ENCODE measurements at regions of chr17 and their contacts with region 1.

Region 1: DNA sequence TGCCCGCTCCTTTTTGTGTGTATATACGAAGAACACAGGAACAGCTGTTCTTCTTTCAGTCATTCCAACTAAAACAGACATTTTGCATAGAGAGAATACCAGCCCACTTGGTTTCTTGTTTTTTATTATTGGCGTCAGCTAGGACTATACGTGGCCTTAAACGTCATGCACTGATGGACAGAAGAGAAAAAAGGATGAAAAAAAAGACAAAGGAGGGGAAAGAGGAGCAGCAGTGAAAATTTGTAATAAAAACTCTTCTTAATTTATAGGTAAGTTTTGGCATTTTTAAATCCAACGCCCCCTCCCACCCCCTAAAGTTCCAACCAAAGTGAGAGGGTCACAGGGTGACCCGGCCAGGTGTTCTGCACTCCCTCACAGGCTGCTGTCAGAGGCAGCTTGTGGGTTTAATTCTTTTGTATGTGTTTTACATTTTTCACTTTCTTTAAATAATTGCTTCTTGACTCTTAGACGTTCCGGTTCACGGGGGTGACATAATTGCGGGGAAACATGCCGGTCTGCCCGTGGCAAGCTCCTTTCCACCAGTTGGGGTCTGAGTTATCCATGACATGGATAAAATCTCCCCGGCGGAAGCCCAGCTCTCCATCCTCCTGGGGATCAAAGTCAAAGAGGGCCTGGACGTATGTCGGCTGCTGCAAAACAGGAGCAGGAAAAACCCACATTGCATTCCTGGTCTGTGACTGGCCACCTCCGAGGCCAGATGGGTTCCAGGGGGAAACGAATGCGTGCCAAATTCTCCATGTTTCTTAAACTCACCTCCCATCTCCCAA is 30.9 kb upstream of the SLC25A19 start:
- DNase-seq: no peak
- H3K4me3 ChIP-seq: no peak overlapping the region
- H3K27ac ChIP-seq: peak overlapping the region; percentile 44 to 59
- H3K4me1 ChIP-seq: no peaks in the 10 kb centered on the region
- H3K27me3 ChIP-seq: no peaks in the 10 kb centered on the region
- CTCF ChIP-seq: no peak
- POLR2A ChIP-seq: no peak

Region 2: DNA sequence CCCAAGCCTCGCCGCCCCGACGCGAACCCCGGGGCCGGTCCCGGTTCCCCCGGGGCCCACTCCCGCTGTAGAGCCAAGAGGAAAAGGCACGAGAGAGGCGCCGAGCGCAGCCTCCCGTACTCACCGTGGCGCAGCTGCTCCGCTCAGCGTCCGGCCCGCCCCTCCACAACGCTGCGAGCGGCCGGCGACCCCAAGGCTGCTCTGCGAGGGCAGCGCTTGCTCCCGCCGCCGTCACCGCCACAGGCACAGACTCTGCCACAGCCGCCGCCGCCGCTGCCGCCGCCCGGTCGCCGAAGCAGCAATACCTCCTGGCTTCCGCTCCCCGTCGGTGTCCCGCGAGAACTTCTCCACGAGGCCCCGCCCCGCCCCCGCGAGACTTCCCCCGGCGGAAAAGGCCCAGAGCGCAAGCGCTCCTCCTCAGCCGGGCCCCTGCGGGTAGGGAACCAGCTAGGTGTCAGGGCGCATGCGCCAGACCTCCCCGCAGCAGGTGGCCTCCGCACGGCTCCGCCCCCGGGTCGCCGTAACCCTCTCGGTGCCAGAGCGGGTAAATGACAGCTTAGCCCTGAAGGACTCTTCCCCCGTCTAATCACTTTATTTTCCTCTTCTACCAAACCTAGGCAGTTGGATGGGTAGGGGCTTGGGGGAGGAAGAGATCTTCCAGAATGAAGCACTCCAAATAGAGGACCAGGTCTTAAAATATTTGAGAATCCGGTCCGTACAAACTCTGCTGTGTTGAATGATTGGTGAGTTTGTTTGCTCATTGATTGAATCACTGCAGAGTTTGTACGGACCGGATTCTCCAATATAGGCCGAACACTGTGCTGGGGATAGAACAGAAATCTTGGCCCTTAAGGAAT is 85.5 kb after region 1 on chr17 and contains the start of gene GRB2:
- intact Hi-C with region 1: loop called (anchors 5 kb)
- DNase-seq: peak; percentile 98 to 99
- H3K4me3 ChIP-seq: peak within 1 kb of the TSS; percentile 69 to 95
- H3K27ac ChIP-seq: peak within 1 kb of the TSS; percentile 79 to 86
- H3K4me1 ChIP-seq: peaks cover 0 to 13% of the 10 kb centered on the region in 2 donors
- H3K27me3 ChIP-seq: no peaks in the 10 kb centered on the region
- CTCF ChIP-seq: peak in 1 of 4 experiments; percentile 41
- POLR2A ChIP-seq: peak; percentile 61 to 84
- total RNA-seq, gene GRB2: 51.5 to 127 (median 78.1) TPM

Region 3: DNA sequence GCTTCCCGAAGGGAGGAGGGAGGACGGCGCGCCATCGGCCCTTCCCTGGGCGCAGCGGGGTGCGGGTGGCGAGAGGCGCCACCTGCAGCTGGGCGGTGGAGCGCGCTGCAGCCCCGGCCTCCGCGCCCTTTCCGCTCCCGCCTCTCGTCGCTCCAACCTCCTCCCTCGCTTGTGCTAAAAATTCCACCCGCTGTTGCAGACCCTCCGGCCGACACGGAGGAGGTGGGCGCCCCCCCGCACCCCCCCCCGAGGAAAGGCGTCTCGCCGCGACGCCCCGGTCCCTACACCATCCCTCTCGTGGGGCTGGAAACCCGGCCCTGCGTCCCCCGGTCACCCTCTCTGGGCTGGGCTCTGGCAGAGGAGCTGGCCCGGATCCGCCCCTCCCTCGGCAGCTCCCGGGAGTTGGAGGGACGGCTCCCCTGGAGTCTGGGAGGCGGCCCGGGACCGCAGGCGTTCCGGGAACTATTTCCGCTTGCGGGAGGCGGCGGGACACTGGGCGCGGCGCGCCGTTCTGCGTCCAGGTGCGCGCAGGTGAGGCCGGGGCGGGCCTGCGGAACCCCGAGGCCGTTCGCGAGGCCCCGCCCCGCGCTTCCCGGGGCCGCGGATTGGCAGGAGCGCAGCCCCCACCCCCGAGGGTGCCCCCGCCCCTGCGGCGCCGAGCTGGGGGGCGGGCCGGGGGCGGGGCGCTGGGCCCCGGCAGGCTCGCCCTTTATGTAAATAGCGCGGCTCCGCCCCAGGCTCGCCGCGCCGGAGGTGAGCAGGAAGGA is 205.0 kb after region 1 on chr17 and contains the start of gene LLGL2:
- intact Hi-C with region 1: loop called (anchors 10 kb)
- DNase-seq: peak; percentile 66 to 68
- H3K4me3 ChIP-seq: peak within 1 kb of the TSS; percentile 67 to 85
- H3K27ac ChIP-seq: peak within 1 kb of the TSS; percentile 71 to 79
- H3K4me1 ChIP-seq: peaks cover 0 to 10% of the 10 kb centered on the region in 2 donors
- H3K27me3 ChIP-seq: no peaks in the 10 kb centered on the region
- CTCF ChIP-seq: peak in 3 of 4 experiments; percentile 31 to 62 (median 58)
- POLR2A ChIP-seq: peak; percentile 29 to 50
- total RNA-seq, gene LLGL2: 3.1 to 31.9 (median 14.0) TPM